Caco-2 (cell line): ENCODE measurements at regions of chr11 and their contacts with region 1.

Region 1: DNA sequence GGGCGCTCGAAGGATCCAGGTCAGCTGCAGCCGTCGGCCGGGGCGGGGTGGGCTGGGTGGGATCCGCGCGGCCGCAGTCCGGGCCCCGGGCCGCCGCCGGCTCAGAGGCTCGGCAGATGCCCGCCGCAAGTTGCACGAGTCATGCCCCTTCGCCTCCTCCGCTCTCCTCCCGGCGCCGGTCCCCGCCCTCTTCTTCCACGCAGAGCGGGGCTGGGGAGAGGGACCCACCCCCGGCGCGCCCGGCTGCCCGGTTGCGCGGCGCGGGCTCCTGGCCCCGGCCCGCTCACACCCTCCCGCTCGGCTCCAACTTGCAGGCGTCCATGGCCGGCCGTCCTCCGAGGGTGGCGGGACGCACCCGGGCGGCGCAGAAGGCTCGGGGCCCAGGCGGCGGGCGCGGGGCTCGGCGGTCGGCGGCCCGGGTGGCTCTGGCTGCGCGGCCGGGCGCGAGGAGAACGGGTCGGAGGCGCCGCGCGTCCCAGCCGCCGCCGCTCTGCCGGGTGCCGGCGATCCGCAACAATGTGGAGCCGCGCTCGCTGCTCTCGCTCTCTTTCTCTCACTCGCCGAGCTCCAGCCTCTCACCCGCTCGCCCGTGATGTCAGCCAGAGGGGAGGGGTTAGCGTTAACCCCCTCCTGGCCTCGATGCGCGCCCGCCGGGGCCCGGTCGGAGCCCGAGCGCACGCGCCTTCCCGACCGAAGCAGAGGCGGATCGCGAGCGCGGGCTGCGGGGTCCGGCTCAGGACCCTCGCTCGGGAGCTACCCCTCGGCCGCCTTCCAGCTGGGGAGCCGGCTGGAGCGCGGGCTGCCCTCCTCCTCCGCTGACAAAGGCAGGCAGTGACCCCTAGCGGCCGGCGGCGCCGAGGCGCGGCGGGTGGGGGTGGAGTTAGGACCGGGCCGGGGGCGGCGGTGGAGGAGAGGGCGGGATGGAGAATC is at the start of gene NECTIN1:
- DNase-seq: peak; percentile 93 to 98
- H3K4me3 ChIP-seq: peak within 1 kb of the TSS; percentile 87
- H3K4me3 Mint-ChIP-seq: peak within 1 kb of the TSS; percentile 89
- H3K27ac Mint-ChIP-seq: peak within 1 kb of the TSS; percentile 15
- H3K4me1 ChIP-seq: peaks cover 25% of the 10 kb centered on the region
- H3K4me1 Mint-ChIP-seq: peaks cover 22% of the 10 kb centered on the region
- H3K27me3 ChIP-seq: no peaks in the 10 kb centered on the region
- H3K27me3 Mint-ChIP-seq: peaks cover 5% of the 10 kb centered on the region
- CTCF ChIP-seq: peak; percentile 99
- total RNA-seq, gene NECTIN1: 60.1 and 63.6 TPM in 2 replicates

Region 2: GRCh38 chr11:119445850-119446249 is 283.1 kb before region 1 on chr11:
- CTCF ChIA-PET with region 1: no interaction called
- POLR2A ChIA-PET with region 1: no interaction called
- intact Hi-C with region 1: no loop called
- DNase-seq: no peak
- H3K4me3 ChIP-seq: no peak overlapping the region
- H3K4me3 Mint-ChIP-seq: no peak overlapping the region
- H3K27ac Mint-ChIP-seq: no peak overlapping the region
- H3K4me1 ChIP-seq: peaks cover 6% of the 10 kb centered on the region; the same call in 1 of the 2 replicates
- H3K4me1 Mint-ChIP-seq: no peaks in the 10 kb centered on the region
- H3K27me3 ChIP-seq: no peaks in the 10 kb centered on the region
- H3K27me3 Mint-ChIP-seq: peaks cover 5% of the 10 kb centered on the region
- CTCF ChIP-seq: no peak

Region 3: DNA sequence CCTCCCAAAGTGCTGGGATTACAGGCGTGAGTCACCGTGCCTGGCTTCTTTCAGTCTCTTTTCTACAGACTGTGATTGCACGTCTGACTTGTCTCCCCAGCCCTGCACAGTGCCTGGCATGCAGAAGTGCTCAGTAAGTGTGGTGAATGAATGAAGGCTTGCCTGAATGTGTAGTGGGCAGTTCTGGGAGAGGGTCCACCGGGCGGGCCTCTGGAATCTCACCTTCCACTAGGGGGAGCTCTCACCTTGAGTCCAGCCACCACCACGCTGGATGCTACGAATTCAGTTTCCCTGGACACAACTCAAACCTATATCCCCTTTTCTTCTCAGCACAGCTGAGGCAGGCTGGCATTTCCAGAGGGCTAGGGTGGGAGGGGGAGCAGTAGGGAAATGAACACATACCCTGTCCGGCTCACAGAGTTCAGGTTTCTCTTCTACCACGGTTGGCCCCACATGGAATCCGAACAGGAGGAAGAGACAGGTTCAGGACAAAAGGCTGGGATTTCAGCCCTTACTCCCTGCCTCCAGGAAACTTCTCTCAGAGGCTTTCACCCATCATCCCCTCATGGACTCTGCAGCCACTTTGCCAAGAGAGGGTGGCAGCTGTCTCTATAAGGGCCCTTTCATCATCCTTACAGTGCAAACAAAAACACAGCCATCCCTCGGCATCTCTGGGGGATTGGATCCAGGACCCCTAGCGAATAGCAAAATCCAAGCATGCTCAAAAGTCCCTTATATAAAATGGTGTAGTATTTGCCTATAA is 86.8 kb before region 1 on chr11:
- CTCF ChIA-PET with region 1: interaction called, 6 read pairs
- POLR2A ChIA-PET with region 1: no interaction called
- intact Hi-C with region 1: loop called (anchors 1 kb)
- DNase-seq: peak in 1 of 2 experiments; percentile 59
- H3K4me3 ChIP-seq: no peak overlapping the region
- H3K4me3 Mint-ChIP-seq: no peak overlapping the region
- H3K27ac Mint-ChIP-seq: no peak overlapping the region
- H3K4me1 ChIP-seq: no peaks in the 10 kb centered on the region
- H3K4me1 Mint-ChIP-seq: no peaks in the 10 kb centered on the region
- H3K27me3 ChIP-seq: no peaks in the 10 kb centered on the region
- H3K27me3 Mint-ChIP-seq: no peaks in the 10 kb centered on the region
- CTCF ChIP-seq: peak; percentile 83 to 85

Region 4: GRCh38 chr11:119694334-119694733 is 34.6 kb before region 1 on chr11:
- CTCF ChIA-PET with region 1: interaction called, 22 read pairs
- POLR2A ChIA-PET with region 1: no interaction called
- intact Hi-C with region 1: loop called (anchors 1 kb)
- DNase-seq: peak in 1 of 2 experiments; percentile 62
- H3K4me3 ChIP-seq: no peak overlapping the region
- H3K4me3 Mint-ChIP-seq: no peak overlapping the region
- H3K27ac Mint-ChIP-seq: peak overlapping the region; percentile 22
- H3K4me1 ChIP-seq: peaks cover 13% of the 10 kb centered on the region; the same call in 1 of the 2 replicates
- H3K4me1 Mint-ChIP-seq: peaks cover 21% of the 10 kb centered on the region
- H3K27me3 ChIP-seq: no peaks in the 10 kb centered on the region
- H3K27me3 Mint-ChIP-seq: no peaks in the 10 kb centered on the region
- CTCF ChIP-seq: peak; percentile 38 to 73

Region 5: GRCh38 chr11:119739021-119739703 is 10.2 kb after region 1 on chr11:
- CTCF ChIA-PET with region 1: interaction called, 27 read pairs
- POLR2A ChIA-PET with region 1: interaction called, 4 read pairs
- intact Hi-C with region 1: no loop called
- DNase-seq: peak; percentile 68 to 80
- H3K4me3 ChIP-seq: no peak overlapping the region
- H3K4me3 Mint-ChIP-seq: no peak overlapping the region
- H3K27ac Mint-ChIP-seq: peak overlapping the region; percentile 18
- H3K4me1 ChIP-seq: peaks cover 24% of the 10 kb centered on the region
- H3K4me1 Mint-ChIP-seq: peaks cover 39% of the 10 kb centered on the region
- H3K27me3 ChIP-seq: no peaks in the 10 kb centered on the region
- H3K27me3 Mint-ChIP-seq: no peaks in the 10 kb centered on the region
- CTCF ChIP-seq: no peak

Region 6: GRCh38 chr11:119999220-119999619 is 270.3 kb after region 1 on chr11:
- CTCF ChIA-PET with region 1: interaction called, 18 read pairs
- POLR2A ChIA-PET with region 1: no interaction called
- intact Hi-C with region 1: loop called (anchors 10 kb)
- DNase-seq: peak in 1 of 2 experiments; percentile 52
- H3K4me3 ChIP-seq: no peak overlapping the region
- H3K4me3 Mint-ChIP-seq: no peak overlapping the region
- H3K27ac Mint-ChIP-seq: no peak overlapping the region
- H3K4me1 ChIP-seq: no peaks in the 10 kb centered on the region
- H3K4me1 Mint-ChIP-seq: no peaks in the 10 kb centered on the region
- H3K27me3 ChIP-seq: no peaks in the 10 kb centered on the region
- H3K27me3 Mint-ChIP-seq: peaks cover 9% of the 10 kb centered on the region
- CTCF ChIP-seq: peak; percentile 46 to 68